Testis (tissue), 5 donors: ENCODE measurements at regions of chr16 and their contacts with region 1.

Region 1: GRCh38 chr16:20849587-20850390 is 43.5 kb downstream of the REXO5 start:
- DNase-seq: peak; percentile 82
- H3K4me3 ChIP-seq: no peak overlapping the region
- H3K27ac ChIP-seq: peak overlapping the region; percentile 68 to 76
- H3K4me1 ChIP-seq: peaks cover 39% of the 10 kb centered on the region
- H3K27me3 ChIP-seq: no peaks in the 10 kb centered on the region
- CTCF ChIP-seq: peak; percentile 86 to 96 (median 93)
- POLR2A ChIP-seq: no peak

Region 2: DNA sequence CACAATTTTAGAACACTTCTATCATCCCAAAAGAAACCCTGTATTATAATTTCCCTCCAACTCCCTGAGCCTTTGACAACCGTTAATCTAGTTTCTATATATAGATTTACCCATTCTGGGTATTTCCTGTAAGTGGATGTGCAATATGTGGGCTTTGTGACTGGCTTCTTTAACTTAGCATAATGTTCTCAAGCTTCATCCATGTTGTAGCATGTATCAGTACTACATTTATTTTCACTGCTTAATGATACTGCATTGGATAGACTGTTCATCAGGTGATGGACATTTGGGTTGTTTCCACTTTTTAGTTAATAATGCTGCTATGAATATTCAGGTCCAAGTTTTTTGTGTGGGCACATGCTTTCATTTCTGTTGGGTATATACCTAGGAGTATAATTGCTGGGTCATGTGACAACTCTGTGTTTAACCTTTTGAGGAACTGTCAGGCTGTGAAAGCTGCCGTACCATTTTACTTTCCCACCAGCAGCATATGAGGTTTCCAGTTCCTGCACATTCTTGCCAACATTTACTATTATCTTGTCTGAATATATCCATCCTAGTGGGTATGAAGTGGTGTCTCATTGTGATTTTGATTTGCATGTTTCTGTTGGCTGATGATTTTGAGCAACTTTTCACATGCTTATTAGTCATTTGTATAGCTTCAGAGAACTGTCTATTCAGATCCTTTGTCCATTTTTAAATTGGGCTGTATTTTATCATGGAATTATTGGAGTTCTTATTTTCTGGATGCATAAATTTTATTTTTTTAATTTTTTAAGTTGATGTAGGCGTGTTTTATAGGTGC is 27.1 kb before region 1 on chr16:
- intact Hi-C with region 1: no loop called
- DNase-seq: no peak
- H3K4me3 ChIP-seq: no peak overlapping the region
- H3K27ac ChIP-seq: no peak overlapping the region
- H3K4me1 ChIP-seq: no peaks in the 10 kb centered on the region
- H3K27me3 ChIP-seq: no peaks in the 10 kb centered on the region
- CTCF ChIP-seq: no peak
- POLR2A ChIP-seq: no peak

Region 3: DNA sequence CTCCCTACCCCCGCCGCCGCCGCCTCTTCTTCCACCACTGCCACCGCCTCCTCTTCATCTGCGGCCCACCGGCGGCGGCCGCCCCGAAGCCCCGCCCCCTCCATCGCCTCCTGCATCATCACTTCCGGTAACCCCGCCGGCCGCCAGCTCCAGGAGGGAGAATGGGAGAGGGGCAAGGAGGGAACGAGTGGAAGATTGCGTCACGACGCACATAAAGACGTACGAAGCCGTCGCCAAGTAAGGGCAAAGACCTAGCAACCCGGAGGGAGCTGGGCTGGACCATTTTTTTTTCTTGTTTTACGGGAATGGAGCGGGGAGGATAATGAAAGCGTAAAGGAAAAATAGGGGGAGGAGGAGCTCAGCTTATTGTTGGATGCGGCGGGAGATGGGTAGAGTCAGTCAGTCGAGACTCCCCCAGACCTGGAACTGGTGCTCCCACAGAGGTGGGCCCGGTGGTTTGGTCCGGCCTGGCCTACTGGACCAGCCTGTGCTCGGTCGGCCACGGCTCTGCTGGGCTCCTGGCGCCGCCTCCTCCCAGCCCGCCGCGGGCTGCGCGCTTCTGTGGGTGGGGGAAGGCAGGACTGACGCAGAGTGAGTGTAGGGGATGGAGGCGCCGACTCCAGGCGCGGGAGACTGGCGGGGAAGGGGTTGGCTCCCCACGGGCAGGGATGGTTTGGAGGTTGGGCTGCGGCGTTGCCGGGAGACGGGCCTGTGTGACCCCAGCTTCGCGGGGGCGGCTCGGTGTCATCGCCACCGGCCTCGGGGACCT is 50.7 kb after region 1 on chr16 and contains the starts of genes DCUN1D3 and LYRM1:
- intact Hi-C with region 1: loop called (anchors 10 kb)
- DNase-seq: peak; percentile 99
- H3K4me3 ChIP-seq: peak within 1 kb of the TSS; percentile 81 to 85
- H3K27ac ChIP-seq: peak within 1 kb of the TSS; percentile 92 to 95
- H3K4me1 ChIP-seq: peaks cover 33% of the 10 kb centered on the region
- H3K27me3 ChIP-seq: no peaks in the 10 kb centered on the region
- CTCF ChIP-seq: no peak
- POLR2A ChIP-seq: peak; percentile 22
- total RNA-seq, gene DCUN1D3: 15.2 to 16.5 TPM
- total RNA-seq, gene LYRM1: 30.2 to 43.0 TPM

Region 4: DNA sequence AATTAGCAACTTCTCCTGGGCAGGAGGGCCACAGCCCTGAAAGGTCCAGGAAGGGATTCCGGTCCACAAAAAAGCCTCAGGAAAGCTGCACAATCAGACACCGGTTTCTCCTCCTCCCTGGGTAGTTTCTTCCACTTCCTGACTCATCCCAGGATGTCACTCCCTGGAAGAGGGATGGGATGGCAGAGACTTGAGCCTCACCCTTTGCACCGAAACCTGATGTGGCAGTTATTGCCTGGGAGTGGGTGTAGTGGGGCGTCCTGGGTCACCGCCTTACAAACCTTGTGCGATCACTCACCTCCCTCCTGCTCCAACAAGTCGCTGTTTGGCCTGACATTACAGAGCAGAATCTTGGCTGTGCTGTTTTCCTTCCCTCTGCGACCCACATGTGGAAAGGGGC is 121.6 kb after region 1 on chr16:
- intact Hi-C with region 1: no loop called
- DNase-seq: no peak
- H3K4me3 ChIP-seq: no peak overlapping the region
- H3K27ac ChIP-seq: no peak overlapping the region
- H3K4me1 ChIP-seq: no peaks in the 10 kb centered on the region
- H3K27me3 ChIP-seq: no peaks in the 10 kb centered on the region
- CTCF ChIP-seq: no peak
- POLR2A ChIP-seq: no peak

Region 5: DNA sequence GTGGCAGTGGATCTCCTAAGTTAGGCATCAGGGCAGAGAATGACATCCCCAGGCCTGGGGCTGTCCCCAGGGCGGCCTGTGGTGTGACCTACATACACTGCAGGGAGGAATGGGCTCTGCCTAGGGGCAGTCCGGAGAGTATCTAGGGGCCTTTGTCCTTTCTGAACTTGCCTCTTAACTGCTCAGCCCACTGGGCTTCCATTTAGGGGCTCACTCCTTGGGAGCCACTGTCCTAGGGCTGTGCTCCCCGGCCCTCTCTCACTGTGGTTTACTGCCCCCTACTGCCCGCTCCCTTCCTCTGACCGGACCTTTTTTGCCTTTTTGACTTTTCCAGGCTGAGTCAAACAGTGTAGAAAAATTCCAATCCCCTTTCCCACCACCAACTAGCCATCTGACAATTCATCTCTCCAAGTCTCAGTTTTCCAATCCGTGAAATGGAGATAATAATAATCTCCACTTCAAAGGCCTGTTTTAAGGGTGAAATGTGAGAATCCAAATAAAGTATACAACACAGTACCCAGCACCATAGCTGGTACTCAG is 234.0 kb after region 1 on chr16:
- intact Hi-C with region 1: loop called (anchors 10 kb)
- DNase-seq: peak; percentile 73
- H3K4me3 ChIP-seq: no peak overlapping the region
- H3K27ac ChIP-seq: no peak overlapping the region
- H3K4me1 ChIP-seq: no peaks in the 10 kb centered on the region
- H3K27me3 ChIP-seq: no peaks in the 10 kb centered on the region
- CTCF ChIP-seq: peak; percentile 45 to 64 (median 62)
- POLR2A ChIP-seq: no peak